B cell (primary cell): ENCODE measurements at regions of chr21 and their contacts with region 1.

Region 1: DNA sequence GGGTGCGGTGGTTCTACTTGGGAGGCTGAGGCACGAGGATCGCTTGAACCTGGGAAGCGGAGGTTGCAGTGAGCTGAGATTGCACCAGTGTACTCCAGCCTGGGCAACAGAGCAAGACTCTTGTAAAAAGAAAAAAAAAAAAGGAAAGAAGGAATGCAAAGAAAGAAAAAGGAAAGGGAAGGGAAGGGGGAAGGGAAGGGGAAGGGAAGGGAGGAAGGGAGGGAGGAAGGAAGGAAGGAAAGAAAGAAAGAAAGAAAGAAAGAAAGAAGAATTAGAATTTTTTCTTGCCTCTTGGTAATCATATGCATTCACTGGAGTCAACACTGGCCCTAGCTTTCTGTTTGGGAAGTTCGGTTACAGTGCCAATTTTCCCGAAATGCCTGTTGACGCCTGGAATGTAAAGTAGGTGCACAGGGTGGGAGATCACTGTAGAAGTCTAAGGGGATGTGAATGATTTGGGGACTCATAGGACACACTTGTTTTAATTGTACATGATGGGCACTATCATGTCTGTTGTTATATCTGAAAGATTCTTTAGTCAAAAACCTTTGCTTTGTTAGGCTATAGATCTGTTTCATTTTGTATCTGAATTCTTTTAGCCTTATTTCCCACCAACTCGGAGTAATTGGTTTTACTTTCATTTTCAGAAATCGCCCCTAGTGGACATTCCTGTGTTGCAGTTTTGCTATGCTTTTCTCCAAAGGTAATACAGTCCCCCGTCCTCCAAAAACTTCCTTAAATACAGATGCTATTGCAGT is 59.8 kb upstream of the MORC3 start:
- DNase-seq: peak; percentile 78
- ATAC-seq: peak; percentile 44
- H3K4me3 ChIP-seq: peak overlapping the region; percentile 21 to 71 (median 34)
- H3K4me3 Mint-ChIP-seq: peak overlapping the region; percentile 86
- H3K27ac ChIP-seq: peak overlapping the region; percentile 68 to 77
- H3K27ac Mint-ChIP-seq: peak overlapping the region; percentile 94
- H3K4me1 ChIP-seq: peaks cover 81 to 90% of the 10 kb centered on the region in 2 donors
- H3K4me1 Mint-ChIP-seq: peaks cover 73% of the 10 kb centered on the region
- H3K27me3 ChIP-seq: no peaks in the 10 kb centered on the region
- H3K27me3 Mint-ChIP-seq: no peaks in the 10 kb centered on the region
- CTCF ChIP-seq: peak; percentile 82

Region 2: GRCh38 chr21:36246080-36246631 is 14.1 kb before region 1 on chr21:
- CTCF ChIA-PET with region 1: interaction called, 6 read pairs
- POLR2A ChIA-PET with region 1: interaction called, 11 read pairs
- intact Hi-C with region 1: no loop called
- DNase-seq: no peak
- ATAC-seq: no peak
- H3K4me3 ChIP-seq: no peak overlapping the region
- H3K4me3 Mint-ChIP-seq: no peak overlapping the region
- H3K27ac ChIP-seq: no peak overlapping the region
- H3K27ac Mint-ChIP-seq: no peak overlapping the region
- H3K4me1 ChIP-seq: peaks cover 10 to 11% of the 10 kb centered on the region in 2 donors
- H3K4me1 Mint-ChIP-seq: peaks cover 11% of the 10 kb centered on the region
- H3K27me3 ChIP-seq: no peaks in the 10 kb centered on the region
- H3K27me3 Mint-ChIP-seq: no peaks in the 10 kb centered on the region
- CTCF ChIP-seq: no peak

Region 3: GRCh38 chr21:36297921-36298594 is 37.8 kb after region 1 on chr21:
- CTCF ChIA-PET with region 1: interaction called, 35 read pairs
- POLR2A ChIA-PET with region 1: interaction called, 48 read pairs
- intact Hi-C with region 1: loop called (anchors 1 kb)
- DNase-seq: peak; percentile 92
- ATAC-seq: peak; percentile 88
- H3K4me3 ChIP-seq: peak overlapping the region in 4 of 5 experiments; percentile 5 to 53 (median 29)
- H3K4me3 Mint-ChIP-seq: peak overlapping the region; percentile 80
- H3K27ac ChIP-seq: peak overlapping the region; percentile 94 to 97
- H3K27ac Mint-ChIP-seq: peak overlapping the region; percentile 97
- H3K4me1 ChIP-seq: peaks cover 52 to 71% of the 10 kb centered on the region in 2 donors
- H3K4me1 Mint-ChIP-seq: peaks cover 53% of the 10 kb centered on the region
- H3K27me3 ChIP-seq: no peaks in the 10 kb centered on the region
- H3K27me3 Mint-ChIP-seq: no peaks in the 10 kb centered on the region
- CTCF ChIP-seq: no peak

Region 4: GRCh38 chr21:37072988-37073416 is 812.8 kb after region 1 on chr21 and contains the starts of genes PIGP and TTC3:
- CTCF ChIA-PET with region 1: no interaction called
- POLR2A ChIA-PET with region 1: interaction called, 3 read pairs
- intact Hi-C with region 1: loop called (anchors 10 kb)
- DNase-seq: peak; percentile 98
- ATAC-seq: peak; percentile 67
- H3K4me3 ChIP-seq: peak within 1 kb of the TSS; percentile 80 to 92 (median 86)
- H3K4me3 Mint-ChIP-seq: peak within 1 kb of the TSS; percentile 98
- H3K27ac ChIP-seq: peak within 1 kb of the TSS; percentile 98
- H3K27ac Mint-ChIP-seq: peak within 1 kb of the TSS; percentile 99
- H3K4me1 ChIP-seq: peaks cover 22 to 23% of the 10 kb centered on the region in 2 donors
- H3K4me1 Mint-ChIP-seq: peaks cover 46% of the 10 kb centered on the region
- H3K27me3 ChIP-seq: no peaks in the 10 kb centered on the region
- H3K27me3 Mint-ChIP-seq: no peaks in the 10 kb centered on the region
- CTCF ChIP-seq: no peak
- total RNA-seq, gene PIGP: 21.7 and 22.7 TPM in 2 replicates
- total RNA-seq, gene TTC3: 163 and 191 TPM in 2 replicates